Stomach (tissue), 19 donors: ENCODE measurements at regions of chr2 and their contacts with region 1.

Region 1: DNA sequence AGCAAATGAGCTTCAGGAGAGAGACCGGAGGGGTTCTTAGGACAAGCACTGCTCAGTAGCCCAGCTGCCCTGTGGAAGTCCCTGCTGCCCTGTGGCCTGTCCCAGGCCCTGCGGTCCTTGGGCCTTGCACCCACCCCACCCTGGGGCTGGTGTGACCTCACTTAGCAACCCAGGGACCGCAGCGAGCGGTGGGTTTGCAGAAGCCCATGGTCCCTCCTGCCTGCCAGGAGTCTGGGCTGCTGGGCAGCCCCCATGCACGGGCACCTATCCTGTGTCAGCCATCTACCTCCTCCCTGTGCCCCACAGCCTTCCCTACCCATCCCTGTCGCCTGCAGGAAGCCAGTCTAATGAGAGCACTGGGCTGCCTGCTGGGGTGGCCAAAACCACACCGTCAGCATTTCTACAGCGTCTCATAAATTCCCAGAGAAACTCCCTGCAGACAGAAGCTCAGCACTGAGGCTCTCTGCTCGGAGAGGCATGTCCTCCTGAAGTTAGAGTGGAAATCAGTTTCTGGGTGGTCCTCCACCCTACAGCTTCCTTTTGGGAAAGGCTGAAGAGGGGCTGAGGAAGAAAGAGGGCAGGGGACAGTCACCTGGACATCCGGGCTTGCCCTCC is 231.1 kb upstream of the HS6ST1 start:
- DNase-seq: peak; percentile 17 to 40
- H3K4me3 ChIP-seq: no peak overlapping the region
- H3K27ac ChIP-seq: no peak overlapping the region
- H3K4me1 ChIP-seq: no peaks in the 10 kb centered on the region
- H3K27me3 ChIP-seq: no peaks in the 10 kb centered on the region
- CTCF ChIP-seq: no peak
- EP300 ChIP-seq: no peak
- POLR2A ChIP-seq: no peak

Region 2: DNA sequence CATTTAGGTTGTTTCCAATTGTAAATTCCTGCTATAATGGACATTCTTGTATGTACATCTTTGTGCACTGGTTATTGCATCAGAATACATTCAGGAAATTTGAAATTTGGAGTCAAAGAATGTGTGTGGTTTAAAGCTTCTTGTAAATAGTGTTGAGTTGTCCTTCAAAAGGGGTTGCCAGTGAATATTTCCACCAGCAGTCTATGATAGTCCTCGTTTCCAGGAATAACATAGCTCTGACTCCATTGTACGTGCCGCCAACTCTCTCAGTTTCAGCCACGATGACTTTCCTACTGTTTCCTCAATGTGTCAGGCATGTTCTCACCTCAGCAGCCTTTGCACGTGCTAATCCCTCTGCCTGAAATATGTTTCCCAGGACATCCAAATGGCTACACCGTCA is 220.1 kb before region 1 on chr2:
- intact Hi-C with region 1: loop called (anchors 10 kb)
- DNase-seq: no peak
- H3K4me3 ChIP-seq: no peak overlapping the region
- H3K27ac ChIP-seq: no peak overlapping the region
- H3K4me1 ChIP-seq: peaks cover 0 to 16% (median 3%) of the 10 kb centered on the region in 4 donors
- H3K27me3 ChIP-seq: no peaks in the 10 kb centered on the region
- CTCF ChIP-seq: no peak
- EP300 ChIP-seq: no peak
- POLR2A ChIP-seq: no peak

Region 3: GRCh38 chr2:128664499-128664971 is 114.8 kb after region 1 on chr2:
- intact Hi-C with region 1: no loop called
- DNase-seq: no peak
- H3K4me3 ChIP-seq: no peak overlapping the region
- H3K27ac ChIP-seq: no peak overlapping the region
- H3K4me1 ChIP-seq: no peaks in the 10 kb centered on the region
- H3K27me3 ChIP-seq: peaks cover 0 to 11% (median 0%) of the 10 kb centered on the region in 3 donors
- CTCF ChIP-seq: no peak
- EP300 ChIP-seq: no peak
- POLR2A ChIP-seq: no peak

Region 4: DNA sequence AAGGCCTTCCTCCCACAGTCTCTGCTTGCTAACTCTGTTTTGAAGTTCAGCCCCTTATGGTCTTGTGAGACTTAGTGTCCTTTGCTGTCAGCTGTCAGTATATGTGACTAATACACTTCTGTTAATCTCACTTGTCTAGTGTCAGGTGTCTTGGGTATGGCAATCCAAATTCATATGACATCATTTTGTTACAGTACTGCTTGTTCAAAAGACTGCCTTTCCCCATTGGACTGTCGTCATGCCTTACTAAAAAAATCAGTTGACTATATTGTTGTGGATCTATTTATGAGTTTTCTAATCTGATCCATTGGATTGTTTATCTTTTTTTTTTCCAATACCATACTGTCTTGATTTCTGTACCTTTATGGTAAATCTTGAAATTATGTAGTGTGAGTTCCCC is 380.3 kb after region 1 on chr2:
- intact Hi-C with region 1: no loop called
- DNase-seq: no peak
- H3K4me3 ChIP-seq: no peak overlapping the region
- H3K27ac ChIP-seq: no peak overlapping the region
- H3K4me1 ChIP-seq: no peaks in the 10 kb centered on the region
- H3K27me3 ChIP-seq: no peaks in the 10 kb centered on the region
- CTCF ChIP-seq: no peak
- EP300 ChIP-seq: no peak
- POLR2A ChIP-seq: no peak